Activated CD4-positive, alpha-beta memory T cell treated with anti-CD3 and anti-CD28 coated beads, Interleukin-2, amount 10 ng/mL, durations not matched to agents 7 days and 5 days (primary cell): ENCODE measurements at regions of chr14 and their contacts with region 1.

Region 1: DNA sequence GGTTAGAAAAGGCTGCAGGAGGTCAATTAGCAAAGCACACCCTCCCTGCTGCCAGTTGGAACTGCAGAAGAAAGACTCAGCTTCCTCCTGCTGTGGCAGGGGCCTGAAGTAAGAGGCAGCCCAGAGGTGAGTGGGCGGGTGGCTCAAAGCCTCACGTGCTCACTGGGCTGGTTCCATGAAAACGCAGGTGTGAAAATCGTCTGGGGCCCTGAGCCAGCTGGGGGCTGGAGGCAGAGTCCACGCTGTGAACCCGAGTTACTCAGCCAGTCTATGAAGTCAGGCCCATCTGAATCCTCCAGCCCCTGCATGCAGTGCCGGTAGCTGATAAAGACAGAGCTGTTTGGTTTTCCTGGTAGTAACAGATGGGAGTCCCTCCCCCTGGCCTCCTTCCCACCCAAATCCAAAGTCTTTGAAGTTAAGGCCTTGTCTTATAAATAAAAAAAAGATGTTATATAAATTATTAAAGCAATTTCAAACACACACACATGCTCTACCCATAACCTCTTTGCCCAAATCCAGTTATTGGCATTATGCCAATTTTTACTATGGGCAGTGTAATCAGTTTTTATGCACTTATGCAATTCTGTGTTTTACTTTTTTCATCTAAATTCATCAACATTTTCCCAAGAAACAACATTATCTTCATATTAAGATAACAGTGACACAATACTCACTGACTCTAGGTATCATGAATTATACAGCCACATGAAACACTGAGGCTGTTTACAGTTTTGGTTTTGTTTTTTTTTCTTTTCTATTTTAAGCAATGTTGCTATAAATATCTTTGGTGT is 57.9 kb upstream of the PNMA1 start:
- DNase-seq: peak; percentile 73
- H3K4me3 Mint-ChIP-seq: peak overlapping the region; percentile 12
- H3K27ac Mint-ChIP-seq: peak overlapping the region; percentile 80
- H3K4me1 Mint-ChIP-seq: peaks cover 71% of the 10 kb centered on the region
- H3K27me3 Mint-ChIP-seq: no peaks in the 10 kb centered on the region

Region 2: DNA sequence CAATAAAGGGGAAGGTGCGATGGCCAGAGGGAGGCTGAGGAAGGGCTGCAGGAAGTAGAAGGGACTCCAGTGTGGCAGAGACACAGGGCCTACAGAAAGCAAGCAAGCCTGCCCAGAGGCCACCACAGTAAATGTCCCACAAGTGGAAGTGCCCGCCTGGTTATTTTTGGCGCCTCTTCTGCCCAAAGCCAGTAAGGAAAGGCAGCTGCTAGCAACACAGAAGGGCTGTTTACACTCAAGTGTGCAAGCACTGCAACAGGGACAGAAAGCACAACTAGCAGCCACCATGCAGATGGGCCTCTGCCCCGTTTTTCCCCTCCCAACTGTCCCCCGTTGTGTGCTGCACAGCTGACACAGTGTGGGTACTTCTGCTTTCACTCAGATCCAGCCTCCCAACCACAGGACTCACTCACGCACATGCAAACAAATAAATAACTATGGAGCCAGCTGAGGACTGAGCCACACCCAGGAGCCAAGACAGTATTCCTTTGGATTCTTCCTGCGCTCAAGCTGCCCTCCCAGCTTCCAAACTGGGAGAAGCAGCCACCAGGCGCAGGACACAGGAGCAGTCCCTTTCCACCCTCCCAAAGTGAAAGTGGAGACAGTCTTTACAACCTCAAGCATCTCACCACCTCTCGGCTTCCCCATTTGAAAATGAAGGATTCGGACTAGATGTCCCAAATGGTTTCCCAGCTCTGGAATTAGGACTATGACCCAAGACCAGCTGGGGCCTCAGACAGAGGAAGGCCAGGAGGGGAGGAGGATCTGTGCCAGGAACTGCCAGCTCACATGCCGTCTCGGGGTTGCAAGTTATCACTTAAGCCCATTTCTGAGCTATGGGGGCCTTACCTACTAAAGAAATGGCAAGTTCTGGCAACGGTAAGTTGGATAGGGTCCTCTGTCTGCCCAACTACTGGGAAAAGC is 17.8 kb before region 1 on chr14:
- CTCF ChIA-PET with region 1: interaction called, 31 read pairs
- POLR2A ChIA-PET with region 1: interaction called, 51 read pairs
- DNase-seq: peak; percentile 67
- H3K4me3 Mint-ChIP-seq: peak overlapping the region; percentile 86
- H3K27ac Mint-ChIP-seq: peak overlapping the region; percentile 82
- H3K4me1 Mint-ChIP-seq: peaks cover 95% of the 10 kb centered on the region
- H3K27me3 Mint-ChIP-seq: no peaks in the 10 kb centered on the region